ENCODE measurements at regions of chr7 and their contacts with region 1.

Region 1: DNA sequence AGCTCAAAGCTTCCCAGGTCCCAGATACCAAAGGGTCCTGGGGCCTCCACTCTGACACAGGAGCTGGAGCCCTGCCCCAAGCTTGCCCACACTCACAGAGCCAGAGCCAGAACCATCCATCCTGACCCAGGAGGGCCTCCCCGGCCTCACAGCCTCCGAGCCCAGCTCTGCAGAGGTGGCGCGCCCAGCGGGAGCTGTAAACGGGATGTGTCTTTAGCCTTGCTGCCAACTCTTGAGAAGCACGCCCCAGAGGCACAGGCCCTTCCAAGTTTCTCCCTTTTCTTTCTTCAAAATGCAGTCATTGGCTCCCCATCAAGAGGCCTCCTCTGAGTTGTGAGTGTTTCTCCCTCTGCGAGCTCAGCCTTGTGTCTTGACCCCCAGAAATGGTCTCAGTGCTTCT is 75.0 kb downstream of the PDGFA start:
- DNase-seq: no peak
- ATAC-seq: no peak
- H3K4me3 ChIP-seq: no peak overlapping the region
- H3K27ac ChIP-seq: no peak overlapping the region
- H3K4me1 ChIP-seq: peaks cover 11 to 14% of the 10 kb centered on the region in 2 donors
- H3K27me3 ChIP-seq: no peaks in the 10 kb centered on the region
- CTCF ChIP-seq: no peak
- POLR2A ChIP-seq: no peak

Region 2: DNA sequence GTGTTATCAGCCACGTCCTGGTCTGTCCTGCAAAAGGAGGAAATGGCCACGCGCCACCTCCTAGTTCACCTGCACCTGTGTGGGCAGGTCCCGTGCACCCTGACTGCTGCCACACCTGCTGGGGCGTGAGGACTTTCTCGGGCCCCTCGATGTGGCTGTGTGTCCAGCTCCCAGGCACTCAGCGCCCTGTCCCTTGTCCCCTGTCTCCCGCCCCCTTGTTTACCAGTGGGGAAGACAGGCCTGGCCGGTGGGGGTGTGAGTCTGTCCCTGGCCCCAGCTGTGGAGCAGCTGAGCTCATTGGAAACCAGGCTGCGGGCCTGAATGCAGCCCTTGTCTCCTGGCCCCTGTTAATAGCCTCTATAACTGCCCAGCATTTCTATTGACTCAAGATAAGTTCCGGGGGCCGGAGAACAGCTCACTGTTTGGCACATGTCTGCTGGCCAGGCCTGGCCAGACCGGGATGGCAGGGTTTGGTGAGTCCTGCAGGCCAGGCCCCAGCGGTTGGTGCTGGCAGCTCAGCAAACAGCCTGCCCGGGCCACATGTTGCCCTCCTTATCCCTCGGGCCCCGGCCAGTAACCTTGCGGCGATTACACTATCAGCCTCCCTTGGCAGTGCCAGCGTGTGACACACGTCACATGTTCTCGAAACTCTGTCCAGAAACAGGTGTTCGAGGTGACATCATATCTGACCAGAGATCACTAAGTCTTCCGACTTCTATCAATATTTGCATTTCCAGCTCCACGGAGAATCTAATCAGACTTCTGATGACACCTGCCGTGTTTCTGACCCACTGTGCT is 102.6 kb before region 1 on chr7:
- in situ Hi-C with region 1: no loop called
- intact Hi-C with region 1: loop called (anchors 2 kb)
- DNase-seq: peak; percentile 52 to 65
- ATAC-seq: peak; percentile 84 to 90
- H3K4me3 ChIP-seq: no peak overlapping the region
- H3K27ac ChIP-seq: peak overlapping the region in 3 of 4 donors; percentile 61 to 81 (median 65)
- H3K4me1 ChIP-seq: peaks cover 7 to 8% of the 10 kb centered on the region in 2 donors
- H3K27me3 ChIP-seq: no peaks in the 10 kb centered on the region
- CTCF ChIP-seq: no peak
- POLR2A ChIP-seq: no peak

Region 3: GRCh38 chr7:471866-472639 is 27.4 kb after region 1 on chr7:
- in situ Hi-C with region 1: no loop called
- intact Hi-C with region 1: loop called (anchors 2 kb)
- DNase-seq: peak; percentile 91 to 96
- ATAC-seq: peak; percentile 97 to 98
- H3K4me3 ChIP-seq: no peak overlapping the region
- H3K27ac ChIP-seq: peak overlapping the region; percentile 77 to 84 (median 80)
- H3K4me1 ChIP-seq: peaks cover 13 to 14% of the 10 kb centered on the region in 2 donors
- H3K27me3 ChIP-seq: no peaks in the 10 kb centered on the region
- CTCF ChIP-seq: no peak
- POLR2A ChIP-seq: no peak

Region 4: GRCh38 chr7:525740-526139 is 81.1 kb after region 1 on chr7:
- in situ Hi-C with region 1: no loop called
- intact Hi-C with region 1: no loop called
- DNase-seq: no peak
- ATAC-seq: no peak
- H3K4me3 ChIP-seq: no peak overlapping the region
- H3K27ac ChIP-seq: no peak overlapping the region
- H3K4me1 ChIP-seq: peaks cover 10% of the 10 kb centered on the region in 2 donors
- H3K27me3 ChIP-seq: peaks cover 0 to 4% (median 0%) of the 10 kb centered on the region in 3 donors
- CTCF ChIP-seq: no peak
- POLR2A ChIP-seq: no peak

Measured in gastrocnemius medialis (tissue), 4 donors.